Left cardiac atrium (tissue), 4 donors: ENCODE measurements at regions of chr3 and their contacts with region 1.

Region 1: GRCh38 chr3:3005146-3005744 is 104.9 kb downstream of the IL5RA start:
- DNase-seq: no peak
- ATAC-seq: no peak

Region 2: GRCh38 chr3:2354702-2355101 is 650.5 kb before region 1 on chr3:
- intact Hi-C with region 1: loop called in 1 of 2 experiments (anchors 5 kb)
- DNase-seq: peak; percentile 37
- ATAC-seq: peak; percentile 93 to 97